SK-N-SH (cell line): ENCODE measurements at regions of chr1 and their contacts with region 1.

Region 1: GRCh38 chr1:53182111-53182593 is 14.5 kb upstream of the CPT2 start:
- DNase-seq: peak; percentile 70
- H3K4me3 ChIP-seq: no peak overlapping the region; a peak in 1 of 4 replicates
- H3K27ac ChIP-seq: no peak overlapping the region
- H3K4me1 ChIP-seq: peaks cover 2 to 7% of the 10 kb centered on the region in 2 experiments; a peak in 2 of 4 replicates
- H3K27me3 ChIP-seq: no peaks in the 10 kb centered on the region
- CTCF ChIP-seq: peak; percentile 86
- EP300 ChIP-seq: no peak
- RAD21 ChIP-seq: peak; percentile 71

Region 2: DNA sequence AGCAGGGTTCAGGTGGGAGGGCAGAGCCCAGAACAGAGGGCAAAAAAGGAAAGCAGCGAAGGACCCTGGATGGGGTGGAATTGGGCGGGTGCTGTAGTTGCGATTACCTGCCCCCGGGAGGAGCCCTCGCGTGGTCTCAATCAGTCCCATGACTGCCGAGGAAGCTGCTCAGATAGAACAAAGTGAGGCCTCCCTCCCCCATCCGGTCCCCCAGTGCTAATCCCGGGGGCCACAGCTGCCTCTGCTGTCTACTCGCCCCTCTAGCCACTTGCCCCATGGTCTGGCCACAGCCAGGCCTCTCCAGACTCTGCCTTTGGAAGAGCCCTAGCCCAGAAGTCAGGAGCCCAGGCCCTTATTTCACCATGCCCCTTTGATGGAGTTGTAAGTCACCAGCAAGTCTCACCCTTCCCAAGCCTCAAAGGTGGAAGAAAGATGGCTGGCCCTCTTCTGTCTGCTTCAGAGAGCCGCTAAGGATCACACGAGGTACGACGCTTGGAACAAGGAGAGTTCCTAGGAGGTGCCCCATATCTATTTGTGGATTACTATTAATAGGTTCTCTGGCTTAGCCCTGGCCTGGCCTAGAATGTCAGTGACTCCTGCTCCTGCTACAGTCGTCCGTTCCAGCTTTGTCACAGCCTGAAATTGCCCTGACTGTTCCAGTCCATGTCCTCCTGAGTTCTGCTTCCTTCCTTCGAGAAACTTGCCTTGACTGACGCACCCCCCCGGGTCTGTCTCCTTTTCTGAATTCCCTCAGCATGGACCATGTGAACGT is 277.0 kb before region 1 on chr1:
- CTCF ChIA-PET with region 1: interaction called, 65 read pairs
- POLR2A ChIA-PET with region 1: no interaction called
- DNase-seq: peak; percentile 88
- H3K4me3 ChIP-seq: no peak overlapping the region
- H3K27ac ChIP-seq: no peak overlapping the region
- H3K4me1 ChIP-seq: no peaks in the 10 kb centered on the region; a peak in 1 of 4 replicates
- H3K27me3 ChIP-seq: no peaks in the 10 kb centered on the region
- CTCF ChIP-seq: peak; percentile 61
- EP300 ChIP-seq: no peak
- RAD21 ChIP-seq: peak; percentile 78

Region 3: DNA sequence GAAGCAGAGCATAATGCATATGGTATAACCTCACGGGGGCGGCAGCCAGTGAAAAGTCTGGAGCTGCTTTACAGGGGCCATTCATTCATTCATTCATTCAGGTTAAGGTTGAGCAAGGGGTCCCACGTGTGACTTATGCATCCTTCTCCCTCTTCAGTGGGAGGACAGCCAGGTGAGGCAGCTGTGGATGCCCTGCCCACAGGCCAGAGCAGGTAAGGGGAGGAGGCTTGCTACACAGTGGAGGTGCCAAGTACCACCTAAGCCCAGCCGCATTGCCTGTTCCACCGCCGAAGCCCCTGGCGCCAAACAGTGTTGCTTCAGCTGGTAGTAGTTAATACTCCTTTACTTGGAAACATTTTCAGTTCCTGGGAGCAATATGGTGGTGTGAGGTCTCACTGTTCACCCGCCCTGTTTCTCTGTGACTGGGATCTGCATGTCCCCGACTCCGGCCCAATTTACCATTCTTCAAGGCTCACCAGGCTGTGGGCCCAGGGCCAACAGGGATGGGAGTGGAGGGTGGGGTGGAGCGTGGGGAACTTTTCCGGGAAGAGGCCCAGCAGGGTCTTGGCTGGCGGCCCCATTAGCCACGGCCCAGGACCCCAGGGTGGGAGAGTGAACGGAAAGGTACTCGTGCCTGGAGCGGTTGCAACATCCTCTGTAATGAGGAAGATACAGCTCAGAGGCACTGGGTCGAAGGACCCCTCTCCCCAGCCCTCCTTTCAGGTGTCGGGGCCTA is 120.9 kb before region 1 on chr1:
- CTCF ChIA-PET with region 1: interaction called, 11 read pairs
- POLR2A ChIA-PET with region 1: no interaction called
- DNase-seq: no peak
- H3K4me3 ChIP-seq: peak overlapping the region; percentile 54; a peak in 3 of 4 replicates
- H3K27ac ChIP-seq: no peak overlapping the region
- H3K4me1 ChIP-seq: peaks cover 3 to 10% of the 10 kb centered on the region in 2 experiments; a peak in 2 of 4 replicates
- H3K27me3 ChIP-seq: no peaks in the 10 kb centered on the region
- CTCF ChIP-seq: no peak
- EP300 ChIP-seq: no peak
- RAD21 ChIP-seq: no peak

Region 4: GRCh38 chr1:53165408-53165961 is 16.7 kb before region 1 on chr1:
- CTCF ChIA-PET with region 1: interaction called, 28 read pairs
- POLR2A ChIA-PET with region 1: no interaction called
- DNase-seq: no peak
- H3K4me3 ChIP-seq: no peak overlapping the region
- H3K27ac ChIP-seq: no peak overlapping the region
- H3K4me1 ChIP-seq: no peaks in the 10 kb centered on the region; a peak in 1 of 4 replicates
- H3K27me3 ChIP-seq: no peaks in the 10 kb centered on the region
- CTCF ChIP-seq: no peak
- EP300 ChIP-seq: no peak
- RAD21 ChIP-seq: no peak

Region 5: DNA sequence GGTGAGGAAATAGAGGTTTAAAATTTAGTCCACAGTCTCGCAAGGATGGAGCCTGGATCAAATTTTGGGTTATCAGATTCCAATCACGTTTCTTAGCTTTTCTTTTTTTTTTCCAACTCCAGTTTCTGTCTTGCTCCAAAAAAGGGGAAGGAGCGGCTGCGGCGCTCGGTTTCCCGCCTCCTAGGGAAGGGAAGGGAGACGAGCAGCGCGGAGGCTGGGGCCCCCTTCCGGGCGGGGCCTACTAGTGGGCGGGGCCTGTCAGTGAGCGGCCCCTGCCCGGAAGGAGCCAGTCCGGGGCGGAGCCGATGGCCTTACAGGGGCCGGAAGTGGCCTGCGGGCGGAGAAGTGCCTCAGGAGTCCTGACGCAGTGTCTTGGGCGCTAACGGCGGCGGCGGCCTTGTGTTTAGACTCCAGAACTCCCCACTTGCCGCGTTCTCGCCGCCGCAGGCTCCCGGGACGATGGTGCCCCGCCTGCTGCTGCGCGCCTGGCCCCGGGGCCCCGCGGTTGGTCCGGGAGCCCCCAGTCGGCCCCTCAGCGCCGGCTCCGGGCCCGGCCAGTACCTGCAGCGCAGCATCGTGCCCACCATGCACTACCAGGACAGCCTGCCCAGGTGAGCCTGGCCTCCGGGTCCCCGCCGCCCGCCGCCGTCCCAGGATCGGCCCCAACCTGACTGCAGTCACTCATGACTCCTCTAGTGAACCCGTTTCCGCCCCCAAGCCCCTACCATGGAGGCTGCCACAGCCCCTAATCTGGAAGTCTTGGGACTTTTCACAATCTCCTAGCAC is 14.5 kb after region 1 on chr1 and contains the start of gene CPT2:
- CTCF ChIA-PET with region 1: interaction called, 34 read pairs
- POLR2A ChIA-PET with region 1: no interaction called
- DNase-seq: peak; percentile 99
- H3K4me3 ChIP-seq: peak within 1 kb of the TSS; percentile 85 to 95
- H3K27ac ChIP-seq: peak within 1 kb of the TSS; percentile 70 to 87
- H3K4me1 ChIP-seq: peaks cover 9 to 17% of the 10 kb centered on the region in 2 experiments; a peak in 3 of 4 replicates
- H3K27me3 ChIP-seq: no peaks in the 10 kb centered on the region
- CTCF ChIP-seq: no peak
- EP300 ChIP-seq: no peak
- RAD21 ChIP-seq: no peak
- polyA plus RNA-seq, gene CPT2: 18.6 and 21.3 TPM in 2 replicates